Activated T-helper 2 cell treated with anti-CD3 and anti-CD28 coated beads, Interferon-gamma antibody, Interleukin-2, Interleukin-4, amounts not matched to agents 10 μg/mL and 5 μg/mL and 100 μg/mL, durations not matched to agents 14 hours and 24 hours and 36 hours (primary cell): ENCODE measurements at regions of chr6 and their contacts with region 1.

Region 1: DNA sequence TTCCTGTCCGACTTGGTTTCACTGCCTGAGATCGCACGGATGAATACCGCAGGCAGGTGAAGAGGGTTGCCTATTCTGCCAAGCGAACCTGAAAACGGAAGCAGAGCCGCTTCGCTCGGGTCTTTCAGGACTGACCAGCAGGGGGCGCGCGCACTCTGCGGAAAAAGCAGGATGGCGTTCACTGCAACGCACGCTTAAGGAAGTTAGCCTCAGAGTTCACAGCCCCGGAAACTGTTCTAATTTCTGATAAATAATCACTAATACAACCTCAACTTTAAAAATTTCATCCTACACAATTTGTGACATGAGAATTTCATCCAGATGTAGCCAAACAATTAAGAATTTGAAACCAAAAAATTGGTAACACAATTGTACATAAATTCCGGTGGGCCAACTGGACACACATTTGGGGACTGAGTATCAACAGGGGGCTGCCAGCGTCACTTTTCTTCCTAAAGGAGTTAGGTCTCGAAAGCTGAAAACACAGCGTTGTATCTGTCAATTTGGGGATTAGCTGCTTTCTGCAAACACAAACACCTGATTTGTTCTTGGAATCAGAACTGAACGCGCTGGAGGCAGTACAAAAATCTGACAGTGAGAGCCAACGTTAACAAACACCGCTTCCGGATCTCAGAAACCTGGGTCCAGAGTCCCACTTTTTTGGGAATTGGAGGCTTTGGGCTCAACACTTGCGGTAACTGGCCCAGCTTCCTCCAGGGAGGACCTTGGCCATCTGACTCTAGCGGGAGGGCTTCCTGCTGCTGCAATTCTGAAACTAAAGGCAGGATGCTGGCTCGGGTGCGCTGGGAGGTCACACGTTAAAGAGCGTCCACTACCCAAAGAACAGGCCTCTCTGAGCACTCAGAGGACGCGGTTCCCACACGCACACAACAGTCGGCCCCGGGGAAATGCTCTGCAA is 8.8 kb downstream of the PXDC1 start:
- DNase-seq: peak; percentile 78
- H3K4me3 Mint-ChIP-seq: peak overlapping the region; percentile 8
- H3K27ac Mint-ChIP-seq: peak overlapping the region; percentile 27
- H3K4me1 Mint-ChIP-seq: peaks cover 6% of the 10 kb centered on the region
- H3K27me3 Mint-ChIP-seq: peaks cover 25% of the 10 kb centered on the region

Region 2: GRCh38 chr6:2986722-2987221 is 755.9 kb before region 1 on chr6:
- intact Hi-C with region 1: no loop called
- DNase-seq: no peak
- H3K4me3 Mint-ChIP-seq: no peak overlapping the region
- H3K27ac Mint-ChIP-seq: no peak overlapping the region
- H3K4me1 Mint-ChIP-seq: peaks cover 21% of the 10 kb centered on the region
- H3K27me3 Mint-ChIP-seq: peaks cover 14% of the 10 kb centered on the region

Region 3: DNA sequence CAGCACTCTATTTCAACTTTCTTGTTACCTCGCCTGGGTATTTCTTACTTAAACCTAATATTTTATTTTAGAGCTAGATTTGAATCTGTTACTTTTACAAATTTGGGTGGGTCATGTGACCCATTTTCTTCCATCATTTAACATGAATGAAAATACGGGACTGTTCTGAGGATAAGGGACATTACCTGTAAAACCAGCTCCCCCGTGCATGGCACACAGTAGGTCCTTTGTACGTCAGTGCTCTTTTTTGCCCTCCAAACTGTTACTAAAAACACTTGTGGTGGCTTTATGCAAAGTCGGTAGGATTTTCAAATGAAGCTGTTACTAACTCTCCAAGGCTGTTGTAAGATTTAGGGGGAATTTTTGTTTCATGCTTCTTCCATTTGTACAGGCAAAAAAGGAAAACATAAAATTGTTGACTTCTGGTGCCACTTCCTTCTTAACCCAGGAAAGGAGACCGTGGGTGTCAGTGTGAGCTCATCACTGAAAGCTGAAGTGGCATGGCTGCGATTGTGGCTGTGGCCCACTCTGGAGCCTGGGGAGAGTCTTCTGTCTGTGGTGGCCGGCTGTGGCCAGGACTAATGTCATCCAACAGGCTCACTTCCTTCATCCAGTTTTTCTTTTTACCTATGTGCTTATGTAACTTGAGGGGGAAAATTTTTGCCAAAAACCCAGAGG is 49.0 kb after region 1 on chr6:
- intact Hi-C with region 1: loop called (anchors 2 kb)
- DNase-seq: no peak
- H3K4me3 Mint-ChIP-seq: no peak overlapping the region
- H3K27ac Mint-ChIP-seq: no peak overlapping the region
- H3K4me1 Mint-ChIP-seq: no peaks in the 10 kb centered on the region
- H3K27me3 Mint-ChIP-seq: no peaks in the 10 kb centered on the region

Region 4: DNA sequence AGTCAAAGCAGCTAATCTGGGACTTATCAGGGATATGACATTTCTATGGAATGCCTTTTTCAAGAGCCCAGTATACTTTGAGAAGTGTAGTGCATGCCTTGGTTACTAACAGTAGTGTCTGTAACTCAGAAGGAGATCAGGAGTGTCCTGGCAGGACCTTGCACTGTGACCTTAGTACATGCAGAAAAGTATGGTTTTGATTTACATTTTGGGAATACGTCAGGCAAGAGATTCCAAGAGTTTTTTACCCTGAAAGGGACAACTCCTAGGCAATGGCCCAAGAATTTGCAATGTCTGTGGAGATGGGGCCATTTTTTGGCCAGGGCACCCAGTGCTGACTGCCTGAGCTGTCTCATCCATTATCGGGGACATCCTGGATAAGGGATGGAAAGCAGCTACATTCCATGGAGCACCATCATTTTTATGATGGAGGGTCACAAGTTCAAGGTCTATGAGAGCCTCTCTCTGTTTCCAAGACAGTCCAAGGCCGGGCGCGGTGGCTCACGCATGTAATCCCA is 186.7 kb after region 1 on chr6:
- intact Hi-C with region 1: loop called (anchors 1 kb)
- DNase-seq: no peak
- H3K4me3 Mint-ChIP-seq: no peak overlapping the region
- H3K27ac Mint-ChIP-seq: no peak overlapping the region
- H3K4me1 Mint-ChIP-seq: no peaks in the 10 kb centered on the region
- H3K27me3 Mint-ChIP-seq: peaks cover 5% of the 10 kb centered on the region

Region 5: GRCh38 chr6:3990692-3991501 is 248.2 kb after region 1 on chr6:
- intact Hi-C with region 1: loop called (anchors 1 kb)
- DNase-seq: peak; percentile 52
- H3K4me3 Mint-ChIP-seq: no peak overlapping the region
- H3K27ac Mint-ChIP-seq: no peak overlapping the region
- H3K4me1 Mint-ChIP-seq: peaks cover 10% of the 10 kb centered on the region
- H3K27me3 Mint-ChIP-seq: no peaks in the 10 kb centered on the region

Region 6: GRCh38 chr6:4155848-4156466 is 413.3 kb after region 1 on chr6:
- intact Hi-C with region 1: loop called (anchors 2 kb)
- DNase-seq: peak; percentile 72
- H3K4me3 Mint-ChIP-seq: no peak overlapping the region
- H3K27ac Mint-ChIP-seq: peak overlapping the region; percentile 35
- H3K4me1 Mint-ChIP-seq: peaks cover 8% of the 10 kb centered on the region
- H3K27me3 Mint-ChIP-seq: peaks cover 5% of the 10 kb centered on the region